ENCODE measurements at regions of chr4 and their contacts with region 1.

Region 1: DNA sequence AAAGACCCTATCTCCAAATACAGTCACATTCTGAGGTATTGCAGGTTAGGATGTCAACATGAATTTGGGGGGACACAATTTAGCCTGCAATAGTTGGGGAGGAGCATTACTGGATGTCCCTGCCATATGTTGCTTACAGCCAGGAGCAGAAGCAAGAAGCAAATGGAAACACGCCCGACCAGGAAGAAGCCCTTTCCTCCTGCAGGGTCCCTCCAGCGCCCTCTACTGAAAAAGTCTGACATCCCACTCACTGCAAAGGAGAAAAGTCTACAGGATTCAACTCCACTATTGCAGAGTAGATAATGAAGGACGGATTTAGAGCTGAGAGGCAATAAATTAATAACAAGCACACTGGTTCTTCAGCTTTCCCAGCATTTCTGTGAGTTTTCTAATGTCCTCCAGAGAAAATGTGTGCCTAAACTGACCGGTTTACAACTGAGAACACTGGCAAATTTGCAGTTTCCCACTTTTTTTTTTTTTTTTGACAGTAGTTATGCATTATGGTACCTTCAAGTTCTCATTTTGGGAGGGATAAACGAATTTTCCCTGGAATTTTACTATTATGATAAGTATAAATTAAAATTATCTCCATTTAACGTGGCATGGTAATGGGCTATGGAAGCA is 31.7 kb downstream of the COQ2 start:
- ATAC-seq: peak; percentile 26 to 80 (median 59)
- H3K4me3 ChIP-seq: no peak overlapping the region
- H3K27ac ChIP-seq: no peak overlapping the region
- H3K4me1 ChIP-seq: peaks cover 21 to 25% of the 10 kb centered on the region in 2 donors

Region 2: DNA sequence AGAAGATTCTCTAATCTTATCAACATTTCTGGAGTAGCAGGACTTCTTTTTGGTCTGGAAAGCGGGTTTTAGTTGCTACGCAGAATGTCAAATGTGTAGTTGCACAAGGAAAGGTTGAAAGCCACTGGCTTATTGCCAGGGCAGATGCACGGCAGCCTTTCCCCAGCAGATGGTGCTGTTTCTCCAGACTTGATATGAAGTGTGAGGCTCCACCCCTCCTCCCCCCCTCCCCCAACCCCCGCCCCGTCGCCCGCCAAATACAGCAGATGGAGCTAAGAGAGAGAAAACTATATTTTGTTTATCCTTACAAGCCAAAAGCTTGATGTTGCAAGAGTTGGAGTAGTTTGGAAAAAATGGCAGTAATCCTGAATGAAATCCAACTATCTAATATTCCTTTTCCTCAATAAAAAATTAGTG is 790.5 kb before region 1 on chr4:
- in situ Hi-C with region 1: loop called in 1 of 9 experiments (anchors 25 kb)
- ATAC-seq: peak; percentile 73 to 90 (median 86)
- H3K4me3 ChIP-seq: no peak overlapping the region
- H3K27ac ChIP-seq: no peak overlapping the region
- H3K4me1 ChIP-seq: no peaks in the 10 kb centered on the region

Region 3: DNA sequence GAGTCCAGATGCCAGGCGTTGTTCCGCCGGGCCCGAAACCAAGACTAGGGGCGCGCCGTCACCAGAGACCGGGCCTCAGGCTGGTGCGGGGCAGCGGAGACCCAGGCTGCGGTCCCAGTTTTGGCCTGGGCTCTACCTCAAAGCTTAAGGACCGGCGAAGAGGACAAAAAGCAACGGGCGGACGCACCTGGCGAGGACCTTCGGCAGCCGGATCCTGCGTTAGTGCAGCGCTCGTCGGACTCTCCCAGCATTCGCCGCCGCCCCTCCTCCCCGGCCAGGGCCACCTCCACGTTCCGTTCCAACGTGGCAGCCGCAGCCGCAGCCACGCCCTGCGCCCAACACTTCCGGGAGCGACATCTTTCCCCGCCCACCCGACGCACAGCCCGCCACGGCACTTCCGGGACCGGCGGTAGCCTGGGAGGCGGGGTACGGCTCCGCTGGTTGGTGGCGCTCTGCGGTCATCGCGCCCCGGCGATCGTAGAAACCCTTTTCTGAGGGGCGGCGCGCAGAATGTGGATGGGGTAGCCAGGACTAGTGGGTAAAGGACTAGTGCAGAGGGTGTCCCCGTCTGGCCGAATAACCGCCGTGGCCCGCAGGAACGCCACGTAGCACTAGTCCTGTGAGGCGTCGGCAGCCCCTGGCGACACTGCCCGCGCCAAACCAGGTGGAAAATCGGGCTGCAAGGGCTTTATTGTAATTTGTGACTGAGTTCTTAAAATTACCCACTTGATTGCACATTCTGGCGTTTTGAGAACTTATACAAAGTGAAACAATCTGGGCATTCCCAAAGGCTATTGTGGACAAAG is 361.8 kb before region 1 on chr4 and contains the start of gene SEC31A:
- in situ Hi-C with region 1: loop called in 1 of 9 experiments (anchors 25 kb)
- ATAC-seq: peak; percentile 81 to 95 (median 93)
- H3K4me3 ChIP-seq: peak within 1 kb of the TSS; percentile 63 to 89 (median 83)
- H3K27ac ChIP-seq: peak within 1 kb of the TSS; percentile 98 to 100
- H3K4me1 ChIP-seq: peaks cover 1 to 6% of the 10 kb centered on the region in 2 donors
- total RNA-seq, gene SEC31A: 119 to 474 (median 230) TPM

Region 4: GRCh38 chr4:82957045-82957444 is 295.8 kb before region 1 on chr4:
- in situ Hi-C with region 1: no loop called
- ATAC-seq: no peak
- H3K4me3 ChIP-seq: no peak overlapping the region
- H3K27ac ChIP-seq: no peak overlapping the region
- H3K4me1 ChIP-seq: no peaks in the 10 kb centered on the region

Region 5: GRCh38 chr4:83074086-83074704 is 178.7 kb before region 1 on chr4:
- in situ Hi-C with region 1: loop called in 4 of 9 experiments (anchors 10 to 25 kb)
- ATAC-seq: peak in 3 of 8 experiments; percentile 57 to 68 (median 62)
- H3K4me3 ChIP-seq: no peak overlapping the region
- H3K27ac ChIP-seq: no peak overlapping the region
- H3K4me1 ChIP-seq: peaks cover 0 to 2% of the 10 kb centered on the region in 2 donors

Region 6: GRCh38 chr4:83083925-83084475 is 168.9 kb before region 1 on chr4:
- in situ Hi-C with region 1: loop called in 4 of 9 experiments (anchors 10 to 25 kb)
- ATAC-seq: peak in 3 of 8 experiments; percentile 95 to 99 (median 95)
- H3K4me3 ChIP-seq: no peak overlapping the region
- H3K27ac ChIP-seq: no peak overlapping the region
- H3K4me1 ChIP-seq: no peaks in the 10 kb centered on the region